A549 (cell line): ENCODE measurements at regions of chr2 and their contacts with region 1.

Region 1: DNA sequence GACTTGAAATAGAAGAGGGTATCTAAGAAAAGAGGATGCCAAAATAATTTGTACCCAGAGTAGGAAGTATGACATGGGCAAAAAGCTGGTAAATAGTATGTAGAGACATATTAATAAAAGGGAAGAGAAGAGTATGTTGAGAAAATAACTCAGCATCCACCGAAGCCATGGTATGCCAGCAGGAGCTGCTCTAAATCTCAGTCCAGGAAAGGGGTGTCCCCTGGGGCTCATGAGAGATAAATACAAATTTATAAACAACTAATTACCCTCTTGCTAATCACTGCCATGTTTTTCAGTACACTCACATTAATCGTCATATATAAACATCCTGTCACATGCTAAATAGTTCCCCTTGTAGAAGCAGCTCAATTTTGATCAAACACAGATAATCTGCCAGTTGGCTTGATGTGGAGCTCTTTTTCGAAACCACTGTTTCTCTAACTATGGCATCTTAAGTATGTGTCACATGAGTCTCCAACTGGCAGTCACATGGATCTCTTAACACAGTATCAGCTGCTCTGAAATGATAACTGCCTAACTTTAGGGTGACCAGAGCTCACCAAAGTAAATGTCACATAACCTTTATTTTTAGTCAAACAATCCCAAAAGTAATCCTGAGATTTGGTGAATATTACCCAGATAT is 31.9 kb downstream of the EXOC6B start:
- DNase-seq: peak in 1 of 2 experiments; percentile 16
- ATAC-seq: no peak; a peak in 1 of 6 replicates
- H3K4me3 ChIP-seq: no peak overlapping the region
- H3K27ac ChIP-seq: no peak overlapping the region
- H3K4me1 ChIP-seq: peaks cover 19% of the 10 kb centered on the region
- CTCF ChIP-seq: no peak
- EP300 ChIP-seq: no peak
- POLR2A ChIP-seq: no peak
- RAD21 ChIP-seq: no peak

Region 2: GRCh38 chr2:72770879-72771461 is 22.9 kb before region 1 on chr2:
- CTCF ChIA-PET with region 1: interaction called, 12 read pairs
- POLR2A ChIA-PET with region 1: interaction called, 3 read pairs
- DNase-seq: peak; percentile 73 to 82
- ATAC-seq: peak; percentile 73 to 80
- H3K4me3 ChIP-seq: no peak overlapping the region
- H3K27ac ChIP-seq: no peak overlapping the region
- H3K4me1 ChIP-seq: 0 out of 3 replicates have a peak, but pooled peaks cover 4% of the 10 kb centered on the region
- CTCF ChIP-seq: peak; percentile 99
- EP300 ChIP-seq: no peak
- POLR2A ChIP-seq: no peak
- RAD21 ChIP-seq: peak; percentile 97 to 99

Region 3: GRCh38 chr2:72813841-72814240 is 19.9 kb after region 1 on chr2:
- CTCF ChIA-PET with region 1: interaction called, 10 read pairs
- POLR2A ChIA-PET with region 1: no interaction called
- DNase-seq: no peak
- ATAC-seq: no peak
- H3K4me3 ChIP-seq: no peak overlapping the region
- H3K27ac ChIP-seq: no peak overlapping the region
- H3K4me1 ChIP-seq: peaks cover 44% of the 10 kb centered on the region
- CTCF ChIP-seq: no peak
- EP300 ChIP-seq: no peak
- POLR2A ChIP-seq: no peak
- RAD21 ChIP-seq: no peak